ENCODE measurements at regions of chr20 and their contacts with region 1.

Region 1: GRCh38 chr20:48733296-48733887 is 94.4 kb downstream of the PREX1 start:
- DNase-seq: no peak
- H3K4me3 ChIP-seq: no peak overlapping the region
- H3K27ac ChIP-seq: no peak overlapping the region
- H3K4me1 ChIP-seq: no peaks in the 10 kb centered on the region
- H3K27me3 ChIP-seq: no peaks in the 10 kb centered on the region
- CTCF ChIP-seq: no peak

Region 2: GRCh38 chr20:48609491-48609978 is 123.9 kb before region 1 on chr20:
- CTCF ChIA-PET with region 1: no interaction called
- dilution Hi-C with region 1: no loop called
- in situ Hi-C with region 1: no loop called
- intact Hi-C with region 1: no loop called
- DNase-seq: no peak
- H3K4me3 ChIP-seq: no peak overlapping the region
- H3K27ac ChIP-seq: no peak overlapping the region
- H3K4me1 ChIP-seq: peaks cover 7% of the 10 kb centered on the region
- H3K27me3 ChIP-seq: no peaks in the 10 kb centered on the region
- CTCF ChIP-seq: no peak

Region 3: DNA sequence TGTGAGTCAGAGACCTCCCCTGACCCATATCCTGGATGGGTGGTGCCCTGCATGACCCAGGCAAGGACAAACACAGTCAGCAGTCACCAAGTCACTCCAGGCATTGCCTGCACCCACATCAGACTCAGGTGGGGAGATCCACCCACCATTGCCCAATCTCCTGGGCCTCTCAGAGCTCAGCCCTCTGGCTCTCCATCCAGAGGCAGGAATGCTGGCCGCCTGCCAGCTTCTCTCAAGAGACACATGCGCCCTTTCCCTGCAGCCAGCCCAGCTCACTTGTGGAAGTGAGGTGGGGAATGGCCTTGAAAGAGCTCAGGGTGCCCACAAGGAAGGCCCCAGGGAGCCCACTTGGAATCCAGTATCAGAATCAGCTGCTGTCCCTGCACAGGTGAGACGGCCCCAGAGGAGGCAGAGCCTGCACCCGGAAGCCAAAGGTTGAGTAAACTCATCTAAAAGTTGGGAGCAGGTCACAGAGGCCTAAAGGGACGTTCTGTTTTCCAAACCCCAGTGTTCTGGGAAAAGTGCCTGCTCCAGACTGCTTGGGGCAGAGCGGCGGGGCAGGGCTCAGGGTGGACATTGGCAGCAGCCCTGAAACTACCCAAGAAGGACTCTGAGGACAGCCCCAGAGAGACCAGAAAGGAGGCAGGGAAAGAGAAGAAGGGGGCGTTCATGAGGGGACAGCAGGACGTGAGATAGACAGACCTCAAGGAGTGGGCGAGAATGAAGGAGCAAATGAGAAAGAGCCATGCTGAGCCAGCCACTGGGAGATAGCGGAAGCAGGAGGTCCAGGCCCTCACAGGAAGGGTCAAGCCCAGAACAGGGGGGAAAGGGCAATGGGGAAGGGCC is 35.3 kb before region 1 on chr20:
- CTCF ChIA-PET with region 1: no interaction called
- dilution Hi-C with region 1: no loop called
- in situ Hi-C with region 1: no loop called
- intact Hi-C with region 1: no loop called
- DNase-seq: peak; percentile 67
- H3K4me3 ChIP-seq: no peak overlapping the region
- H3K27ac ChIP-seq: no peak overlapping the region
- H3K4me1 ChIP-seq: no peaks in the 10 kb centered on the region
- H3K27me3 ChIP-seq: no peaks in the 10 kb centered on the region
- CTCF ChIP-seq: no peak

Region 4: GRCh38 chr20:48807661-48808427 is 74.5 kb after region 1 on chr20:
- CTCF ChIA-PET with region 1: no interaction called
- dilution Hi-C with region 1: loop called (anchors 5 kb)
- in situ Hi-C with region 1: no loop called
- intact Hi-C with region 1: no loop called
- DNase-seq: no peak
- H3K4me3 ChIP-seq: no peak overlapping the region
- H3K27ac ChIP-seq: no peak overlapping the region
- H3K4me1 ChIP-seq: no peaks in the 10 kb centered on the region
- H3K27me3 ChIP-seq: no peaks in the 10 kb centered on the region
- CTCF ChIP-seq: no peak

Measured in mammary epithelial cell (primary cell).